Activated CD4-positive, alpha-beta memory T cell treated with anti-CD3 and anti-CD28 coated beads for 36 hours (primary cell): ENCODE measurements at regions of chr4 and their contacts with region 1.

Region 1: GRCh38 chr4:47562297-47562696 is 77.2 kb downstream of the ATP10D start:
- DNase-seq: no peak
- H3K4me3 Mint-ChIP-seq: no peak overlapping the region
- H3K27ac Mint-ChIP-seq: no peak overlapping the region
- H3K4me1 Mint-ChIP-seq: peaks cover 3% of the 10 kb centered on the region
- H3K27me3 Mint-ChIP-seq: no peaks in the 10 kb centered on the region

Region 2: DNA sequence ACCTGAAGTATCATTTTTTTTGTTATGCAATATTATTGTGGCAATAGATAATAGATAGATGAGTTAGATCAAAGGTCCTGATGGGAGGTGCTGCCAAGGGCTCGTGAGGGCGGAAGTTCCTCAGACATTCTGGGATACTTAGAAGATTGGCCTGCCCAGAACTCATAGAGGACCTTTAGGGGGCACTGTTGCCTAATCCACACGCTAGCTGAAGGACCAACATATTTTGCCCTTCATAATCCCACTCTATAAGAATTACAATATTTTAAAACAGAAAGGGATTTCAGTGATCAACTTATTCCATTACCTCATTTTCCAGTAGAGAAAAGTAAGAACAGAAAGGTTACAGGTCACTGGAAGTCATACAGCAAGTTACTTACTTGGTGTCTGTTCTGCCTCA is 630.3 kb before region 1 on chr4:
- CTCF ChIA-PET with region 1: no interaction called
- POLR2A ChIA-PET with region 1: no interaction called
- intact Hi-C with region 1: loop called (anchors 10 kb)
- DNase-seq: peak; percentile 25
- H3K4me3 Mint-ChIP-seq: no peak overlapping the region
- H3K27ac Mint-ChIP-seq: no peak overlapping the region
- H3K4me1 Mint-ChIP-seq: no peaks in the 10 kb centered on the region
- H3K27me3 Mint-ChIP-seq: peaks cover 3% of the 10 kb centered on the region

Region 3: GRCh38 chr4:47334652-47335051 is 227.6 kb before region 1 on chr4:
- CTCF ChIA-PET with region 1: no interaction called
- POLR2A ChIA-PET with region 1: no interaction called
- intact Hi-C with region 1: no loop called
- DNase-seq: no peak
- H3K4me3 Mint-ChIP-seq: no peak overlapping the region
- H3K27ac Mint-ChIP-seq: no peak overlapping the region
- H3K4me1 Mint-ChIP-seq: no peaks in the 10 kb centered on the region
- H3K27me3 Mint-ChIP-seq: peaks cover 3% of the 10 kb centered on the region

Region 4: DNA sequence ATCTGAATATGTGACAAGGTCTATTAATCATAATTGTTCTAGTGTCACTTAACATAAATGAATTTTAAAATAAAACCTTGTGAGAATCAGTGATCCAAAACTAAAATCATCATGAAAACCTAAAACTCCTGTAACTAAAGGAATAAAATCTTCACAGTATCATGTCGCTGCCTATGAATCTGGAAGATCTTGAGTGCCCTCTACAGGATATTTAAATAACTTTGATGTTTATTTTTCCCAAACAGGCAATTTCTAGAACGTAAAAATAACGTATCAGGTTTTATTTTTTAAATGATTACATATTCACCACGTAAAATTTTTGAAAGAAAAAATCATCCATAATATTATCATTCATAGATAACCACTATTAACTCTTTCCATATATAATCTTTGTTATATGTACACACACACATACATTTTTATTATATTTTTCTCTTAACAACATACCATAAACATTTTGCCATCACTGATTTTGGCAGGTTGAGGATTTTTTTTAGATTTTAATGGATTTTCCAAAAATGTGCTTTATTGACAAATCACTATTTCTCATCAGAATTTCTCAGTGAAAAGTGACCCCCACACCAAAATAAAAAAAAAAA is 178.4 kb before region 1 on chr4:
- CTCF ChIA-PET with region 1: interaction called, 3 read pairs
- POLR2A ChIA-PET with region 1: no interaction called
- intact Hi-C with region 1: loop called (anchors 10 kb)
- DNase-seq: no peak
- H3K4me3 Mint-ChIP-seq: no peak overlapping the region
- H3K27ac Mint-ChIP-seq: no peak overlapping the region
- H3K4me1 Mint-ChIP-seq: no peaks in the 10 kb centered on the region
- H3K27me3 Mint-ChIP-seq: peaks cover 4% of the 10 kb centered on the region

Region 5: GRCh38 chr4:47485047-47485692 is 77.1 kb before region 1 on chr4 and contains the start of gene ATP10D:
- CTCF ChIA-PET with region 1: interaction called, 5 read pairs
- POLR2A ChIA-PET with region 1: no interaction called
- intact Hi-C with region 1: loop called (anchors 2 kb)
- DNase-seq: peak; percentile 86
- H3K4me3 Mint-ChIP-seq: peak within 1 kb of the TSS; percentile 90
- H3K27ac Mint-ChIP-seq: peak within 1 kb of the TSS; percentile 76
- H3K4me1 Mint-ChIP-seq: peaks cover 20% of the 10 kb centered on the region
- H3K27me3 Mint-ChIP-seq: no peaks in the 10 kb centered on the region
- total RNA-seq, gene ATP10D: 2.8 to 3.0 TPM

Region 6: DNA sequence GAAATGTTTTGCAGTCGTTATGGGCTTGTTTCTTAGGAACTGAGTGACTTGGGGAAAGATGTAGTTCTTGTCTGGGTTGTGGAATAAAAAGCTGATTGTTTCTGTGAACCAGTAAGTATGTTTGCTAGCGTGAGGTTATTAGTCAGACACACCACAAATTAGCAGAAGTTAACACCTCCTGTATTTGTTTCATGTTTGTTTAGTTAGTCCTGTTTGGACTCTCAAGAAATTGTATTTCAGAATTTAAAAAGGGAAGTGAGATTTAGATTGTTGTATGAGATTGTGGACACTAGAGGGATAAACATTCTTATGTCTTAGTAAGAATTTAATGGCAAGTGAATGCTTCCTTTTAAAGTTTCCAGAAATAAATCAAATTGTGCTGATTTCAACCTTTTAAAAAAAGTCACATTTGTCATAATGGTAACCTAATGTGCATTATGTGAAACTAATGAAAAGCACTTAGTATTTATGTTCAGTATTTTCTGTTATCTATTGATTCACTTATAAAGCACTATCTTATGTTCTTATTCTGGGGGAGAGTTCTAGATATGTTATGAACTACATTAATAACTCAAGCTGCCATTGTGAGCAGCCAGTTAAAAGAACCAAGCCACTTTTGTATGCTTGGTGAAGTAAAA is 51.7 kb before region 1 on chr4:
- CTCF ChIA-PET with region 1: interaction called, 13 read pairs
- POLR2A ChIA-PET with region 1: no interaction called
- intact Hi-C with region 1: no loop called
- DNase-seq: no peak
- H3K4me3 Mint-ChIP-seq: no peak overlapping the region
- H3K27ac Mint-ChIP-seq: no peak overlapping the region
- H3K4me1 Mint-ChIP-seq: peaks cover 4% of the 10 kb centered on the region
- H3K27me3 Mint-ChIP-seq: no peaks in the 10 kb centered on the region